Activated naive CD4-positive, alpha-beta T cell treated with anti-CD3 and anti-CD28 coated beads for 36 hours (primary cell): ENCODE measurements at regions of chr2 and their contacts with region 1.

Region 1: GRCh38 chr2:73233154-73233931 is at the start of gene PRADC1:
- DNase-seq: peak; percentile 97
- H3K4me3 Mint-ChIP-seq: peak within 1 kb of the TSS; percentile 88
- H3K27ac Mint-ChIP-seq: peak within 1 kb of the TSS; percentile 77
- H3K4me1 Mint-ChIP-seq: peaks cover 31% of the 10 kb centered on the region
- H3K27me3 Mint-ChIP-seq: no peaks in the 10 kb centered on the region
- total RNA-seq, gene PRADC1: 10.1 to 10.2 TPM

Region 2: DNA sequence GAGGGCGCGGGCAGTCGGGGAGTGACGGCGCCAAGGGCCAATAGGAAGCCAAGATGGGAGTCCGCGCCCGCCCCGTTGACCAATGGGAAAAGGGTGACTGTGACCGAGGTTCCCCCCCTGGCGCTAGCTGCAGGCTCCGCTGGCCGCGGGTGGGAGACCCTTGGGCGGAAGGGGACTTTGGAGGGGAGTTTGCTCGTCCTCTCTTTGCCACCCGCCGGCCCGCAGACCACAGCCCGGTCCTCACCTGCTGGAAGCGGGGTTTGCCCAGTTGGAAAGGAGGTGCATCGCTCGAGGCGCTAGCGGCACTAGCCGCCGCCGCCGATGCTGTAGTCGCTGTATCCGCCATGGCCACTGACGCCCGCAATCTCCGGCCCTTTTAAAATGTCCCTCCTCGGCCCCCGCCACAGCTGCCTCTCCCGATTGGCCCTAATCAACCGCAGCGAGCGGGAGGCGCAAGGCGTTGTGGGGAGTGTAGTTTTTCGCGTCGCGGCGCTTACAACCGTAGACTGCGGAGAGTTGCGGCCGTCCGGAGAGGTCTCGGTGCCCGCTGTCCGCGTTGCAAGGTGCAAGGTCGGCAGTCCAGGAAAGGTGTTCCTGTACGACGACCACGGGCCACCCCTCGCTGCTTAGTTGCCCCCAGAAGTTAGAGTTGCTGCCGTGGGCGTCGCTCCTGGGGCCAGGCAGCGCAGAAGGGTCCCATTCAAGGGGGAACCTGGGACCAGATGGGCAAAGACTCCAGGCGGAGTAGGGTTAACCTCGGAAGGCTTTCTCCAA is 161.8 kb before region 1 on chr2 and contains the start of gene SFXN5:
- CTCF ChIA-PET with region 1: no interaction called
- intact Hi-C with region 1: loop called (anchors 1 kb)
- DNase-seq: peak; percentile 96
- H3K4me3 Mint-ChIP-seq: peak within 1 kb of the TSS; percentile 88
- H3K27ac Mint-ChIP-seq: peak within 1 kb of the TSS; percentile 87
- H3K4me1 Mint-ChIP-seq: peaks cover 20% of the 10 kb centered on the region
- H3K27me3 Mint-ChIP-seq: no peaks in the 10 kb centered on the region
- total RNA-seq, gene SFXN5: 5.3 to 6.8 TPM

Region 3: DNA sequence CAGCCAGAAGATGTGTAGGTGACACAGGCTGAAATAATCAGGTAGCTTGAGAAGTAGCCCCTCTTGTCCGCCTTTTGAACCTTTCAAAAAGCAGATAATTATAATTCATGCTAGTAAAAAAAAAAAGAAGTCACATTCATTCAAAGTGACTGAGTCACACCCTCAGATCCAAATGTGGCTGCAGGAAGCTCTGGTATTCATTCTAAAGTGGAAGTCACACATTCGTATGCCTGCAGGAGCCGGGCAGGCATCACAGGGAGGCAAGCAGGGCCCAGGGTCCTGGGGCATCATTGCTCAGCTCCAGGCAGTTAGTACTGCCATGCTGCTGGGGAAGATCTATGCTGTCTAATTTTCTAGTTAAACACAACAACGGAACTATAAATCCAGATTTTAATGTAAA is 98.9 kb before region 1 on chr2:
- CTCF ChIA-PET with region 1: no interaction called
- intact Hi-C with region 1: no loop called
- DNase-seq: no peak
- H3K4me3 Mint-ChIP-seq: no peak overlapping the region
- H3K27ac Mint-ChIP-seq: no peak overlapping the region
- H3K4me1 Mint-ChIP-seq: no peaks in the 10 kb centered on the region
- H3K27me3 Mint-ChIP-seq: no peaks in the 10 kb centered on the region

Region 4: GRCh38 chr2:73202156-73203054 is 30.9 kb before region 1 on chr2 and contains the start of gene NOTO:
- CTCF ChIA-PET with region 1: no interaction called
- intact Hi-C with region 1: no loop called
- DNase-seq: no peak
- H3K4me3 Mint-ChIP-seq: peak within 1 kb of the TSS; percentile 53
- H3K27ac Mint-ChIP-seq: no peak within 1 kb of the TSS
- H3K4me1 Mint-ChIP-seq: peaks cover 5% of the 10 kb centered on the region
- H3K27me3 Mint-ChIP-seq: peaks cover 48% of the 10 kb centered on the region
- total RNA-seq, gene NOTO: not detected

Region 5: DNA sequence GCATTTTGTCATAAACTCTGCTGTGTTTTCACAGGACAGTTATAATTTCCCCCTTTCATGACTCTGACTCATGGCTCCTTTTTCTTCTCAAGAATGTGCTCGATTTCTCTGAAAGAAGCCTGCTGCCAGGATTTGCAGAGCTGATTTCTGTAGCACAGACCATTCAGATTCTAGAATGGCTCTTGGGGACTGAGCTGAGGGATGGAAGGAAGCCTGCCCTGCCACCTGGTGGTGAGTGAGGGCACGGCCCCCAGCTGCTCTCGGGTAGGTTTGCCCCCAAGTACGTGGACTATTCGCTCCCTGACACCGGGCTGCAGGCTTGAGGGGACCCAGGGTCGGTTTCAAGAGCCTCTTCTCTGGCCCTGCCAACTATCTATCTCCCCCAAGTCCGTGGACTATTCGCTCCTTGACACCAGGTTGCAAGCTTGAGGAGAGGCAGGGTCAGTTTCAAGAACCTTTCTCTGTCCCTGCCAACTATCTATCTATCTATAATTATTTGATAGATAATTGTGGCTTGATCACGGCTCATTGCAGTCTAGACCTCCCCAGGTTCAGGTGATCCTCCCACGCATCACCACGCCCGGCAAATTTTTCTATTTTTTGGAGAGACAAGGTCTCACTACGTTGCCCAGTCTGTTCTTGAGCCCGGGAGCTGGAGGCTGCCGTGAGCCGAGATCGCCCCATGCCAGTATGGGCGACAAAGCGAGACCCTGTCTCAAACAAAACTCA is 20.7 kb before region 1 on chr2:
- CTCF ChIA-PET with region 1: interaction called, 18 read pairs
- intact Hi-C with region 1: loop called (anchors 1 kb)
- DNase-seq: peak; percentile 85
- H3K4me3 Mint-ChIP-seq: no peak overlapping the region
- H3K27ac Mint-ChIP-seq: no peak overlapping the region
- H3K4me1 Mint-ChIP-seq: peaks cover 29% of the 10 kb centered on the region
- H3K27me3 Mint-ChIP-seq: peaks cover 3% of the 10 kb centered on the region

Region 6: DNA sequence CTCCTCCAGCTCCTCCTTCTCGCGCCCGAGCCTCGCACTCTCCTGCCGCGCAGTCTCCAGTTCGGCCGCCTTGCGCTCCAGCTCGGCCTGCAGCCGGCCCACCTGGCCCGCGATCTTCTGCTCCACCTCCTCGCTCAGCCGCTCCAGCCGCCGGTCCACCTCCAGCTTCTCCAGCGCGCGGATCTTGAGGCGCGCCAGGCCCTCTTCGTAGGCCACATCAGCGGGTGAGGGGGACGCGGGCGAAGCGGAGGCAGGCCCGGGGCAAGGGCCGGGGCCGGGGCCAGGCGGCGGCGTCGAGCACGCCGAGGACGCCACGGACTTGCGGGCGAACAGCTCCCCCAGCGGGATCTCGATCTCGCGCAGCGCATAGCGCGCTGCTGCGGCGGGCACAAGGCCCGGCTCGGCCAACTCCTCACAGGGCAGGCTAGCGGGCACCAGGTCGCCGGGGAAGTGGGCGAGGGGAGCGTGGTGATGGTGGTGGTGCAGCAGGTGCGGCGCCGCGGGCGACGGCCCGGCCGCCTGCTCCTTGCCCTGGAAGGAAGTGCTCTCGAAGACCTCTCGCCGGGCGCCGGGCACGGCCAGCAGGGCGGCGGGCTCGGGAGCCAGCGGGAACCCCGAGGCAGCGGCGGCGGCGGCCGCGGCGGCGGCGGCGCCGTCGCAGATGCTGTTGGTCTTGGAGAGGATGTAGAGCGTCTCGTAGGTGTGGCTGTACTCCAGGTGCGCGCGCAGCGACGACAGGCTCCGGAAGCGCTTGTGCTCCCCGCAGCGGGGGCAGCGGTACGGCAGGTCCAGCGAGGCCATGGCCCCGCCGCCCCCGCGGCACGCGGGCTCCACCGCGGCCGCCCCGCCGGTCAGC is 35.7 kb after region 1 on chr2:
- CTCF ChIA-PET with region 1: interaction called, 3 read pairs
- intact Hi-C with region 1: loop called (anchors 1 kb)
- DNase-seq: peak; percentile 79
- H3K4me3 Mint-ChIP-seq: peak overlapping the region; percentile 17
- H3K27ac Mint-ChIP-seq: no peak overlapping the region
- H3K4me1 Mint-ChIP-seq: peaks cover 13% of the 10 kb centered on the region
- H3K27me3 Mint-ChIP-seq: no peaks in the 10 kb centered on the region

Region 7: DNA sequence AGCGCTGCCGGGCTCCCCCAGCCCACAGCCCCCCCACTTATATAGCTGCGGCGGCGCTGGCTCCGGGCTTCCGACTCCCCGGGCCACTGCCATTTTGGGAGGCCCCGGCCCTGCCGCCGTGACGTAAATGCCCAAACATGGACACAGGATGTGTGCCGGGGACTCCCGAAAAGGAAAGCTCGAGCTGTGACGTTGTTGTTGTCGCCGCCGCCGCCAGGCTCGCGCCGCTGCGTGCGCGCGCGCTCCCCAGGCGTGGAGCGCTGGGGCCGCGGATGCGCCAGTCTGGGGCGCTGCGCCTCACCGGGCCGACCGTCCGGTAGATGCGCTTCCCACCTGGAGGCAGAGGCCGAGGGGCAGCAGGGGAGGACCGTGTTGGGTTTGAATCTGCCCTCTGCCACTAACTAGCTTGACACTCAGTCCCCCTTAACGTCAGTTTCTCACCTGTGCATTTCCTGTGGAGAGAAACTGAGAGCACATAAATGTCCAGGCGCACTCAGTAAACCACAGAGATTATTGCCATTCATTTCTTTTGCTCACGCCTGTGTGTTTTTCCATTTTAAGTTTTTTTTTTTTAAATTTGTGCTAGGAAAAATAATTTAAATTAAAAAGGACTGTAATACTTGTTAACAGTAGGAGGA is 60.3 kb after region 1 on chr2 and contains the start of gene EGR4:
- CTCF ChIA-PET with region 1: interaction called, 10 read pairs
- intact Hi-C with region 1: loop called (anchors 1 kb)
- DNase-seq: peak; percentile 94
- H3K4me3 Mint-ChIP-seq: peak within 1 kb of the TSS; percentile 73
- H3K27ac Mint-ChIP-seq: no peak within 1 kb of the TSS
- H3K4me1 Mint-ChIP-seq: peaks cover 14% of the 10 kb centered on the region
- H3K27me3 Mint-ChIP-seq: peaks cover 65% of the 10 kb centered on the region
- total RNA-seq, gene EGR4: 0.07 to 0.12 TPM

Region 8: GRCh38 chr2:74119912-74120825 is 886.8 kb after region 1 on chr2:
- CTCF ChIA-PET with region 1: no interaction called
- intact Hi-C with region 1: loop called (anchors 1 kb)
- DNase-seq: peak; percentile 88
- H3K4me3 Mint-ChIP-seq: peak overlapping the region; percentile 82
- H3K27ac Mint-ChIP-seq: peak overlapping the region; percentile 88
- H3K4me1 Mint-ChIP-seq: peaks cover 12% of the 10 kb centered on the region
- H3K27me3 Mint-ChIP-seq: no peaks in the 10 kb centered on the region

Region 9: DNA sequence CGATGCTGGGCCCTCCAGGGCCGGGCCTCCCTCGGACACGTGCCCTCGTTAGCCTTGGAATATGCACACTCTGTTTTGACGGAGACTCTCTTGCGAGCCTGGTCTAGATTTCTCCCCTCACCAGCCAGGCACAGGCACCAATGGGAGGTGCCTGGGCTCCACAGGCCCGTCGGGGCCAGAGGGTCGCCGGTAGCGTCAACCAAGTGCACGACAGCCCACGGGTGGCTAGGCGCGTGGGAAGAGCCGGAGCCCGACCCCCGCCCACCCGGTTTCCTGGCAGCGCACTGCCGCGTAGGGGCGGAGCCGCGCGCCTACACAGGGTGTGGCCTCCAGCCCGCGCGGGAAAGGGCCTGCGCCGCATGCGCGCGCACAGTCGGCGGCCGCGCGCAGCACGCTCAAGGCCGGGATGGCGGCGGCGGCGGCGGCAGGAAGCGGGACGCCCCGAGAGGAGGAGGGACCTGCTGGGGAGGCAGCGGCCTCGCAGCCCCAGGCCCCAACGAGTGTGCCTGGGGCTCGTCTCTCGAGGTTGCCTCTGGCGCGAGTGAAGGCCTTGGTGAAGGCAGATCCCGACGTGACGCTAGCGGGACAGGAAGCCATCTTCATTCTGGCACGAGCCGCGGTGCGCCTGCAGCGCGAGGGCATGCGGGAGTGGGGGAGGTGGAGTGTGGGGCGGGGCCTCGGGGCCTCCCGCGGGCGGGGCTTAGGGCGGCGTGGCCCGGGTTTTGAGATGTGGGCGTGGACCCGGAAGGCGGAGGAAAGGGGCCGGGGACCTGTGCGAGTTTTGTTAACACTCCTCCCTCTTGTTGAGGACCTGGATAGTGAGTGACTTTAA is 1725.1 kb after region 1 on chr2 and contains the start of gene POLE4:
- CTCF ChIA-PET with region 1: no interaction called
- intact Hi-C with region 1: loop called (anchors 5 kb)
- DNase-seq: peak; percentile 95
- H3K4me3 Mint-ChIP-seq: peak within 1 kb of the TSS; percentile 80
- H3K27ac Mint-ChIP-seq: peak within 1 kb of the TSS; percentile 87
- H3K4me1 Mint-ChIP-seq: peaks cover 60% of the 10 kb centered on the region
- H3K27me3 Mint-ChIP-seq: no peaks in the 10 kb centered on the region
- total RNA-seq, gene POLE4: 69.7 to 76.5 TPM